ENCODE measurements at regions of chr1 and their contacts with region 1.

Region 1: DNA sequence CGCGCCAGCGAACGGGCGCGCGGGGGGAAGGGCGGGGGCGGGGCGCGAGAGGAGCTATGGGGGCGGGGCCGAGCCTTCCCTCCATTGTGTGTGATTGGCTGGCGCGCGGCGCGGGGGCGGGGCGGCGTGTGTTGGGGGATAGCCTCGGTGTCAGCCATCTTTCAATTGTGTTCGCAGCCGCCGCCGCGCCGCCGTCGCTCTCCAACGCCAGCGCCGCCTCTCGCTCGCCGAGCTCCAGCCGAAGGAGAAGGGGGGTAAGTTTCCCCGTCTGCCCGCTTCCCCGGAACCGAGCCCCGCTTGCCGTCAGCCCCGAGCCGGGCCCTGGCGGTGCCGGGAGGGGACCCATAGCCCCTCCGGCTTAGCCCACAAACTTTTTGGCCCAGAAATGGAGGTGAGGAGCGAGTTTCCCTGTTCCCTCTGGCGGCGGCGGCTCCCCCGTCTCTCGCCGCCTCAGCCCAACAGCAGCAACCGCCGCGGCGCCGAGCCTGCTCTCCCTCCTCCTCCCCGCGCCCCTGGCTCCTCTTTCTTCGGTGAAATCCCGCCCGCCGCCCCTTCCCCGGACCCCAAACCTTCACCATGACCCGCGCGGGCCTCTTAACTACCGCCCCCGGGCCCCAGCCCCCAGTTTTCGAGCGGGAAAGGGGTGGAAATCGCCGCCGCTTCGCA is at the start of gene H3-3A:
- DNase-seq: peak; percentile 100
- H3K4me3 ChIP-seq: peak within 1 kb of the TSS; percentile 76
- H3K27ac ChIP-seq: peak within 1 kb of the TSS; percentile 100
- H3K4me1 ChIP-seq: peaks cover 4% of the 10 kb centered on the region
- H3K27me3 ChIP-seq: no peaks in the 10 kb centered on the region
- CTCF ChIP-seq: no peak
- total RNA-seq, gene H3-3A: 680 to 810 TPM

Region 2: GRCh38 chr1:225977937-225978748 is 84.5 kb before region 1 on chr1:
- intact Hi-C with region 1: no loop called
- DNase-seq: no peak
- H3K4me3 ChIP-seq: no peak overlapping the region
- H3K27ac ChIP-seq: no peak overlapping the region
- H3K4me1 ChIP-seq: peaks cover 5% of the 10 kb centered on the region
- H3K27me3 ChIP-seq: no peaks in the 10 kb centered on the region
- CTCF ChIP-seq: no peak

Region 3: DNA sequence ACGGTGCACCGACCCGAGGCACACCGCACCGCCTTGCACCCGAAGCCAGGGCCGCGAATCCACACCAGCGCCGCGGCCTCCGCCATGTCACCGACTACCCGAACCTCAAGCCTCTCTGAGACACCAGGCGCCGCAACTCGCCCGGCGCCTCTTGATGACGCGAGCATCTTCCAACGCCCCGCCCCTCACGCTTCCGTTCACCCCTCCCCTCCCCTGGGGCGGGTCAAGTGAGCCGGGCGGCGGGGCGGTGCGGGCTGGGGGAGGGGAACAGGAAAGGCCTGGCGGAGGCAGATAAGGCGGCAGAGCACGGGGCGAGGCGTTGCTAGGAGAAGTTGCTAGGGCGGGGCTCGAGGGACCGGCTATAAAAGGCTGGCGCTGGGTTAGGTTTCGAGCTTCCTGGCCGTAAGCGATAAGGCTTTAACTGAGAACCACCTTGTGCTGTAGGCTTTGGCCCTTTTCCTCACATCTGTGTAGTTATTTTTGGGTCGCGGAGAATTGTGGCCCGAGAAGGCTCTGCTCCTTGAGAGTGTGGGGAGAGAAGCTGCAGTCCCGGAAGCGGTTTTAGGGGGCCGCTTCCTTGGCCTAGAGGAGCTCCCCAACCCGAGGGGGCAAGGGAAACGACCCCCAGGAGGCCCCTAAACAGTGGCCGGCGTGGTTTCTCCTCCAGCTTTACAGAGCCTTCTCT is 63.3 kb before region 1 on chr1 and contains the start of gene SDE2:
- intact Hi-C with region 1: loop called (anchors 5 kb)
- DNase-seq: peak; percentile 100
- H3K4me3 ChIP-seq: peak within 1 kb of the TSS; percentile 46
- H3K27ac ChIP-seq: peak within 1 kb of the TSS; percentile 92
- H3K4me1 ChIP-seq: no peaks in the 10 kb centered on the region
- H3K27me3 ChIP-seq: no peaks in the 10 kb centered on the region
- CTCF ChIP-seq: no peak
- total RNA-seq, gene SDE2: 12.9 to 19.8 TPM

Region 4: GRCh38 chr1:226029093-226029496 is 33.6 kb before region 1 on chr1:
- intact Hi-C with region 1: no loop called
- DNase-seq: peak; percentile 75
- H3K4me3 ChIP-seq: no peak overlapping the region
- H3K27ac ChIP-seq: peak overlapping the region; percentile 80
- H3K4me1 ChIP-seq: peaks cover 18% of the 10 kb centered on the region
- H3K27me3 ChIP-seq: no peaks in the 10 kb centered on the region
- CTCF ChIP-seq: no peak

Region 5: DNA sequence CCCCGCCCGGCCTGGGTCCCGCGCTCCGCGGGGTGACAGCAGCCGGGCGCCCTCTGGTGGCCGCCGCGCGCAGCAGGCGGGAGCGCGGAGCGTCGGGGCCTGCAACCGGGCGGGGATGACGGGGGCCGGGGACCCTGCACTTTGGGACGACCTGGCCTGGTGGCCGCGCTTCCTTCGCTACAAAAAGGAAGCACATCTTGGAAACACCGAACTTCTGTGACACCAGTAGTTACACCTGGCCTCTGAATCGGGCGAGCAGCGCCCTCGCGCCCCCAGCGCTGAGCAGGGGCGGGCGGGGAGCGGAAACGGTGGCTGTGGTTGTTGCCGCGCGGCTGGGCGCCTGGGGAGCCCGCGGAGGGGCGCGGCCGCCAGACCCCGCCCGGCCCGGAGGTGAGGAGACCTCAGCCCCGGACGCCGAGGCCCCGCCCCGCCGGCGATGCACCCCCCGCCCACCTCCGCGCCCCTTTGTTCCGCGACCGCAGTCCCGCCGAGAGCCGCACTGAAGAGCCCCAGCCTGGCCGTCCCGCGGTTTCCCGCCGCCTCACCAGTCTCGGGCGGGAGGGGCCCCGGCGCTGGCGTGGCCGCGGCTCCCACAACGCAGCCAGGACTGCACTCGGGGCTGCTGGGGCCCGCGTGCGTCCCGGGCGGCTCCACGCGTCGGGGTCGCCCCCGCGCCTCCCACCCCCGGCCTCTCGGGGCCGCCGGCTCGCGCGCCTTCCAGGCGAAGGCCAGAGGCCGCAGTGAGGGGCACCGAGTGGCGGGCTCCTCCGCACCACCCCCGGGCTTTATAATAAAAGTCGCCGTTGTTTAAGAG is 59.1 kb after region 1 on chr1:
- intact Hi-C with region 1: loop called (anchors 1 kb)
- DNase-seq: peak; percentile 75
- H3K4me3 ChIP-seq: peak overlapping the region; percentile 66
- H3K27ac ChIP-seq: peak overlapping the region; percentile 98
- H3K4me1 ChIP-seq: peaks cover 6% of the 10 kb centered on the region
- H3K27me3 ChIP-seq: no peaks in the 10 kb centered on the region
- CTCF ChIP-seq: peak; percentile 60

Region 6: DNA sequence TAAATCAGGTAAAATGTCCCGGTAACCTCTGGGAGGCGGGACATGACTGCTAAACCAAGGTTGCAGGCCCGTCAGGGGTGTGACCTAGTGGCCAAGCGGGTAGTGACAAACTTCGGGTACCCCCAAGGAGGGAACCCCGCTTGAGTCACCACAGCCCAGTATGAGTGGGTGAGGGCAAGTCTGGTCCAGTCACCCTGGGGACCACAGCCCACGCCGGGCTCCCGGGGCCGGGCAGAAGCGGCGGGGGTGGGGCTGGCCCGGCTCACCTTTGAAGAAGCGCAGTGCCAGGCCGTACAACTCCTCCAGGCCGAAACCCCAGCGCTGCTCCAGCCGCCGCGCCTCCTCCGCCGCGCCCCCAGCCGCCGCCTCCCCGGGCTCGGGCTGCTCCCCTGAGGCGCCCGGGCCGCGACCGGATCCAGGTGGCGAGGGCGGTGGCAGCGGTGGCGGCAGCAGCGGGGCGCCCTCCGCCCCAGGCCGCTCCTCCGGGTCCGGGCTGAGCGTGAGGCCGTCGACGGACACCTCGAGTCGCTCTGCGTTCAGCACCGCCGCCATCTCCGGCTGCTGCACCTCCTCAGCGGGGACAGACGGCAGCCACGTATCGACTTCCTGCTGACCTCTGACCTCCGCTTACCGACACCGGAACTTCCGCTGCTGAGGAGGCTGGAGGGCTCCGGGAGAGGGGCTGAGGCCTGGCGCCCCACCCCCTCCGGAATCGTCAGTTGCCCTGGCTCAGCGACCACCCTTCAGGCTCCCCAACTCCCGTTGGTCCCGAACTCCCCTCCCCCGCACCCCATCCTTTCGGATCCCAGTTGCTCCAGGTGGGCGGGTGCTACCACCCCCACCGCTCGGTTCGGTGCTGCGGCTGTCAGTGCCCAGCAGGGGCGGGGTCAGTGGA is 123.7 kb after region 1 on chr1 and contains the start of gene ACBD3:
- intact Hi-C with region 1: loop called (anchors 5 kb)
- DNase-seq: peak; percentile 91
- H3K4me3 ChIP-seq: peak within 1 kb of the TSS; percentile 84
- H3K27ac ChIP-seq: peak within 1 kb of the TSS; percentile 95
- H3K4me1 ChIP-seq: no peaks in the 10 kb centered on the region
- H3K27me3 ChIP-seq: no peaks in the 10 kb centered on the region
- CTCF ChIP-seq: no peak
- total RNA-seq, gene ACBD3: 46.6 to 61.6 TPM

Measured in colonic mucosa (tissue), 4 donors.